ENCODE measurements at regions of chr6 and their contacts with region 1.

Region 1: DNA sequence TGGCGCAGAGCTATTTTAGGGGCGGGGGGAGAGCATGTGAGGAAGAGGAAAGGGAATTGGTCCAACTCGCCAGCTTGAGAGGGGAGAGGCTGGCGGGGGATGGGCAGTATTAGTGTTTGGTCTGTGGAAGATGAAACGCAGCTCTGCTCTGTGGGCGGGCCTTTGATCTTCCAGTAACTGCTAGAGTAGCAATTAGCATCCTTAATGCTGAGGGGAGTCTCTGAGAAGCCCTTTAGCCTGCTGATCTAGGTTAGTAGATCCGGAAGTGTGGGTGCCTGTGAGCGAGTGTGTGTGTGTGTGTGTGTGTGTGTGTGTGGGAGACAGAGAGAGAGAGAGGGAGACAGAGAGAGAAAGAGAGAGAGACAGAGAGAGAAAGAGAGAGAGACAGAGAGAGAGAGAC is 117.2 kb upstream of the BACH2 start:
- DNase-seq: peak; percentile 66
- ATAC-seq: peak; percentile 96
- H3K4me3 Mint-ChIP-seq: peak overlapping the region; percentile 87
- H3K27ac Mint-ChIP-seq: peak overlapping the region; percentile 99
- H3K4me1 Mint-ChIP-seq: peaks cover 40% of the 10 kb centered on the region
- H3K27me3 Mint-ChIP-seq: peaks cover 2% of the 10 kb centered on the region

Region 2: GRCh38 chr6:90375681-90376439 is 38.0 kb before region 1 on chr6:
- POLR2A ChIA-PET with region 1: no interaction called
- DNase-seq: no peak
- ATAC-seq: no peak
- H3K4me3 Mint-ChIP-seq: no peak overlapping the region
- H3K27ac Mint-ChIP-seq: no peak overlapping the region
- H3K4me1 Mint-ChIP-seq: peaks cover 1% of the 10 kb centered on the region
- H3K27me3 Mint-ChIP-seq: no peaks in the 10 kb centered on the region

Region 3: DNA sequence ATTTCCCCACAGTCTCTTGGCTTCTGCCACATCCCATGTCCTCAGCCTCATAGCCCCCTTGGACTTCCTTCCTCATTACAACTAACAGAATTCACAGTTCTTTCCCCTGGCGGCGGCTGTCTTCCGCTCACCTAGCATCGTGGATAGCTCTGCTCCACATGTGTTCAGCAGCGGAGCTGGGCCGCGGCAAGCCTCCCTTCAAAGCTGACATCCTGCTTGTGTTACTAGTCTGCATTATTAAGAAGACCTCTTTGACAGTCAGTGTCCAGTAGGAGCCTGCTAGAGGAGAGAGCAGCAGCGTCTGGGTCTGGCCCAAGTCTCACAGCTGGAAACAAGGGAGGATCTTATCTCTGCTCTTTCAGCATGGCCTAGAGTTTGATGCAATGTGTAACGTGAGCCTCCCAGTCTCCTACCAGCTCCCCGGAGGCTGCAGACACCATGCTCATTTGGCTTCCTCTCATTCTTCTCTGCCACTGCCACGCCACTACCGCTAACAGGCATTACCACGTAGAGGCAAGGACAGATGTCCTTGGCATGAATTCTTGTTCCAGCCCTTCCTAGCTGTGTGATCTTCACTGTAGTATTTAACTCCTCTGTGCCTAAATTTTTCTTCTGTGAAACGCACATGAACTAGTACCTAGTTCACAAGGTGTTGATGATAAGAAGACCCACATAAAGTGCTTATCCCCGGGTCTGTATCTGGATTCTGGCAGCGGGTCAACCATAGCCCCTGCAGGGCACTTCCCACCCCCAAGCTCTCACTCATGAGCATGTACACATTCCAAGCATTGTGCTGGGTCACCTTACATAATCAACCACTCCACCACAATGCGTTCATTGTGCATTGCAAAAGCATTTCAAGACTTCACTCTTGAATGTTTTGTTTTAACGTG is 10.1 kb before region 1 on chr6:
- POLR2A ChIA-PET with region 1: interaction called, 19 read pairs
- DNase-seq: no peak
- ATAC-seq: no peak
- H3K4me3 Mint-ChIP-seq: peak overlapping the region; percentile 37
- H3K27ac Mint-ChIP-seq: peak overlapping the region; percentile 72
- H3K4me1 Mint-ChIP-seq: peaks cover 45% of the 10 kb centered on the region
- H3K27me3 Mint-ChIP-seq: no peaks in the 10 kb centered on the region

Region 4: GRCh38 chr6:90458353-90459224 is 44.7 kb after region 1 on chr6:
- POLR2A ChIA-PET with region 1: interaction called, 17 read pairs
- DNase-seq: peak; percentile 68
- ATAC-seq: peak; percentile 87
- H3K4me3 Mint-ChIP-seq: peak overlapping the region; percentile 83
- H3K27ac Mint-ChIP-seq: peak overlapping the region; percentile 94
- H3K4me1 Mint-ChIP-seq: peaks cover 50% of the 10 kb centered on the region
- H3K27me3 Mint-ChIP-seq: no peaks in the 10 kb centered on the region

Measured in activated naive CD8-positive, alpha-beta T cell treated with anti-CD3 and anti-CD28 coated beads, Interleukin-2, amount 10 ng/mL, durations not matched to agents 7 days and 5 days (primary cell).